OCI-LY7 (cell line): ENCODE measurements at regions of chr13 and their contacts with region 1.

Region 1: GRCh38 chr13:38349390-38350113 is at the start of gene UFM1:
- DNase-seq: peak; percentile 94
- H3K4me3 ChIP-seq: peak within 1 kb of the TSS; percentile 99
- H3K27ac ChIP-seq: peak within 1 kb of the TSS; percentile 56
- H3K4me1 ChIP-seq: peaks cover 20% of the 10 kb centered on the region
- CTCF ChIP-seq: no peak
- total RNA-seq, gene UFM1: 33.3 and 34.4 TPM in 2 replicates

Region 2: GRCh38 chr13:37775871-37776270 is 573.7 kb before region 1 on chr13:
- CTCF ChIA-PET with region 1: no interaction called
- POLR2A ChIA-PET with region 1: no interaction called
- intact Hi-C with region 1: loop called (anchors 10 kb)
- DNase-seq: no peak
- H3K4me3 ChIP-seq: no peak overlapping the region
- H3K27ac ChIP-seq: no peak overlapping the region
- H3K4me1 ChIP-seq: peaks cover 2% of the 10 kb centered on the region
- CTCF ChIP-seq: no peak

Region 3: GRCh38 chr13:38167164-38167822 is 182.3 kb before region 1 on chr13:
- CTCF ChIA-PET with region 1: no interaction called
- POLR2A ChIA-PET with region 1: no interaction called
- intact Hi-C with region 1: loop called (anchors 1 kb)
- DNase-seq: no peak
- H3K4me3 ChIP-seq: no peak overlapping the region
- H3K27ac ChIP-seq: no peak overlapping the region
- H3K4me1 ChIP-seq: no peaks in the 10 kb centered on the region
- CTCF ChIP-seq: no peak

Region 4: GRCh38 chr13:39037880-39038568 is 688.5 kb after region 1 on chr13 and contains the starts of genes NHLRC3 and PROSER1:
- CTCF ChIA-PET with region 1: no interaction called
- POLR2A ChIA-PET with region 1: no interaction called
- intact Hi-C with region 1: loop called (anchors 10 kb)
- DNase-seq: peak; percentile 97
- H3K4me3 ChIP-seq: peak within 1 kb of the TSS; percentile 93
- H3K27ac ChIP-seq: peak within 1 kb of the TSS; percentile 80
- H3K4me1 ChIP-seq: peaks cover 36% of the 10 kb centered on the region
- CTCF ChIP-seq: no peak
- total RNA-seq, gene NHLRC3: 26.8 and 28.6 TPM in 2 replicates
- total RNA-seq, gene PROSER1: 35.3 and 43.3 TPM in 2 replicates